ENCODE measurements at regions of chr16 and their contacts with region 1.

Region 1: DNA sequence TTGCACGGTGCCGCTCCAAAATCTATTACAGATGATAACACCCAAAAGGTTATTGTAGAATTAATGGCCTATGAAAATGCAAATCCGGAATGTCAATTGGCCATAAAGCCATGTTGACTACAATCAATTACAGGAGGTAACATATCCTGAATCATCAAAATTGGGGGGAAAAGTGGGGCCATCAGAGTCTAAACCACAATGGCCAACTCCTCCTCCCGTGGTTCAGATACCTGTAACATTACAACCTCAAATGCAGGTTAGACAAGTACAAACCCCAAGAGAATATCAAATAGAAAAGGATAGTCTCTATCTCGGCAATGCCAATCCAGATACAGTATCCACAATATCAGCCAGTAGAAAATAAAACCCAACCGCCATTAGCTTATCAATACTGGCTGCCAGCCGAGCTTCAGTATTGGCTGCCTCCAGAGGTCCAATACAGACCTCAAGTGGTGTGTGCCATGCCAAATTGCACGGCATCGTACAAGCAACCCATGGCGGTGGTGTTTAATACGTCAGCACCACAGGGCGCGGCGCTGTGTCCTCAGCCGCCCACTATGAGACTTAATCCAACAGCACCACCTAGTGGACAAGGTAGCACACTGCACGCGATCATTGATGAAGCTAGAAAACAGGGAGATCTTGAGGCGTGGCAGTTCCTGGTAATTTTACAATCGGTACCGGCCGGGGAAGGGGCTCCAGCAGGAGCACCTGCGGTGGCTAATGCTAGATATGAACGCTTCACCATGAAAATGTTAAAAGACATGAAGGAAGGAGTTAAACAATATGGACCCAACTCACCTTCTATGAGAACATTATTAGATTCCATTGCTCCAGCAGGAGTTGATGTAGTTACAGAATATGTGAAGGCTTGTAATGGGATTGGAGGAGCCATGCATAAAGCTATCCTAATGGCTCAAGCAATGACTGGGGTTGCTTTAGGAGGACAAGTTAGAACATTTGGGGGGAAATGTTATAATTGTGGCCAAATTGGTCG is 15.2 kb downstream of the FLYWCH1 start:
- DNase-seq: peak; percentile 78 to 85
- H3K4me3 ChIP-seq: no peak overlapping the region
- H3K27ac ChIP-seq: no peak overlapping the region
- H3K4me1 ChIP-seq: no peaks in the 10 kb centered on the region
- H3K27me3 ChIP-seq: no peaks in the 10 kb centered on the region
- CTCF ChIP-seq: peak; percentile 94 to 96 (median 95)
- POLR2A ChIP-seq: no peak

Region 2: GRCh38 chr16:2874912-2875362 is 52.0 kb before region 1 on chr16:
- intact Hi-C with region 1: loop called (anchors 10 kb)
- DNase-seq: peak; percentile 71 to 78
- H3K4me3 ChIP-seq: no peak overlapping the region
- H3K27ac ChIP-seq: no peak overlapping the region
- H3K4me1 ChIP-seq: no peaks in the 10 kb centered on the region
- H3K27me3 ChIP-seq: no peaks in the 10 kb centered on the region
- CTCF ChIP-seq: peak; percentile 85 to 99 (median 95)
- POLR2A ChIP-seq: no peak

Region 3: GRCh38 chr16:3242709-3243108 is 315.8 kb after region 1 on chr16:
- intact Hi-C with region 1: no loop called
- DNase-seq: no peak
- H3K4me3 ChIP-seq: no peak overlapping the region
- H3K27ac ChIP-seq: no peak overlapping the region
- H3K4me1 ChIP-seq: no peaks in the 10 kb centered on the region
- H3K27me3 ChIP-seq: no peaks in the 10 kb centered on the region
- CTCF ChIP-seq: no peak
- POLR2A ChIP-seq: no peak